ENCODE measurements at regions of chr5 and their contacts with region 1.

Region 1: DNA sequence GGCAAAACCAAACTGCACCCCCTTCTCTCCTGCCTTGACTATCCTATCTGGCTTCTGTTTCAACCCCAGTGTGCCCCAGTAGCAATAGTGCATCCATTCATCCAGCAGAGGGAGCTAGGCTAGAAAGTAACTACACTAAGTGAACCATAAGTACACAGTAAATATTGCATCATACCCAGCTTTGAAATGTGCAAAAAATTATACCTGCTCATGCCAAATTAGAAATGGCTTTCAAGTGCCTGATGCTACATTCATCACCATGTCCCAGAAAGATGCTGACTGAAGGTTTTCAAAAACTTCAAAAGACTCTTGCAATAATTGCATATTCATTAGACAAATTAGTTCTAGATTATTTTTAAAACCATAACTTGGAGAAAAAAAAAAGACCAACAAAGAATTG is 153.5 kb downstream of the PRELID2 start:
- DNase-seq: peak; percentile 43
- H3K4me3 Mint-ChIP-seq: no peak overlapping the region
- H3K27ac Mint-ChIP-seq: no peak overlapping the region
- H3K4me1 Mint-ChIP-seq: no peaks in the 10 kb centered on the region
- H3K27me3 Mint-ChIP-seq: no peaks in the 10 kb centered on the region

Region 2: GRCh38 chr5:144203750-144204596 is 1477.7 kb before region 1 on chr5:
- CTCF ChIA-PET with region 1: interaction called, 7 read pairs
- POLR2A ChIA-PET with region 1: no interaction called
- intact Hi-C with region 1: loop called (anchors 2 kb)
- DNase-seq: peak; percentile 25
- H3K4me3 Mint-ChIP-seq: no peak overlapping the region
- H3K27ac Mint-ChIP-seq: no peak overlapping the region
- H3K4me1 Mint-ChIP-seq: peaks cover 19% of the 10 kb centered on the region
- H3K27me3 Mint-ChIP-seq: peaks cover 45% of the 10 kb centered on the region

Region 3: GRCh38 chr5:145718956-145719355 is 37.3 kb after region 1 on chr5:
- CTCF ChIA-PET with region 1: no interaction called
- POLR2A ChIA-PET with region 1: no interaction called
- intact Hi-C with region 1: no loop called
- DNase-seq: no peak
- H3K4me3 Mint-ChIP-seq: no peak overlapping the region
- H3K27ac Mint-ChIP-seq: no peak overlapping the region
- H3K4me1 Mint-ChIP-seq: no peaks in the 10 kb centered on the region
- H3K27me3 Mint-ChIP-seq: no peaks in the 10 kb centered on the region